ENCODE measurements at regions of chr16 and their contacts with region 1.

Region 1: DNA sequence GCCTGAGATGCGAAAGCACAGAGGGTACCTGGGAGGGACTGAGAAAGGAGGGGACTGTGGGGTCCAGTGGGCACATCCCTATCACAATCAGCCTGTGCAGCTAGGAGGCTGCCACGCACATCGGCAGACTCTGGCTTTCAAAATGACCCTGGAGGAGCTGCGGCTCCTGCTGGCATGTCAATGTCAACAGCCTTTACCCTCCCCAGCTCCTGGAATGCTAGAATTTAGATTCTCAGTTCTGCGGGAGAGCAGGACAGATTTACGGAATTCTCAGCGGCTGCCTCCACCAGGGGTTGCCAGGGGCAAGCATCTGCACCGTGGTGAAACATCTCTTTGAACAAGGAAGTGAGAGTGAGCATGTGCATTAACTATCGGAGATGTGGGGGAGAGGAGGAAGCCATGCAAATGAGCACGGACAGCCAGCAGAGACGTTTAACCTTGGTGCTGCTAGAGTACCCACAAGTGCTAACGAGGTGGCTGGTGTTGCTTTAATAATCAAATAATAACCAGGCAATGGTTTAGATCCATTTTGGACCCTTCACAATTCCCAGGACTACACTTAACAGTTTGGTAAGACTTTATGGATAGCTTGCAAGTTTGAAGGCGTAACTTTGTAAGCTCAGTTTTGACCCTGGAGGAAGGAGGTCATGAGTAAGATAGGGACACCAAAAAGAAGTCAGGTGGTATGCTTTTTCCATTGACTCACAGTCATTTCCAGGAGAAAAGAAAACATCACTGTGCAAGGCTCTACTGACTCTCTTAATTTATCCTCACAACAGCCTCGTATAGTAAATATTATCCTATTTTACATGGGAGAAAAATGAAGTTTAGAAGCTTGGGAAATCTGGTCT is 54.1 kb downstream of the XYLT1 start:
- H3K4me3 Mint-ChIP-seq: peak overlapping the region; percentile 46
- H3K27ac Mint-ChIP-seq: peak overlapping the region; percentile 84
- H3K4me1 Mint-ChIP-seq: peaks cover 51% of the 10 kb centered on the region
- H3K27me3 Mint-ChIP-seq: no peaks in the 10 kb centered on the region

Region 2: GRCh38 chr16:17448640-17449638 is 32.3 kb after region 1 on chr16:
- intact Hi-C with region 1: loop called (anchors 2 kb)
- H3K4me3 Mint-ChIP-seq: peak overlapping the region; percentile 37
- H3K27ac Mint-ChIP-seq: peak overlapping the region; percentile 92
- H3K4me1 Mint-ChIP-seq: peaks cover 57% of the 10 kb centered on the region
- H3K27me3 Mint-ChIP-seq: no peaks in the 10 kb centered on the region